Esophagus squamous epithelium (tissue), 5 donors: ENCODE measurements at regions of chr18 and their contacts with region 1.

Region 1: GRCh38 chr18:48030616-48031480 is 100.4 kb upstream of the SMAD2 start:
- DNase-seq: no peak
- H3K4me3 ChIP-seq: no peak overlapping the region
- H3K27ac ChIP-seq: peak overlapping the region; percentile 47 to 80 (median 62)
- H3K4me1 ChIP-seq: peaks cover 15 to 96% (median 40%) of the 10 kb centered on the region in 3 donors
- H3K27me3 ChIP-seq: no peaks in the 10 kb centered on the region
- CTCF ChIP-seq: peak; percentile 30 to 79 (median 69)
- POLR2A ChIP-seq: no peak

Region 2: DNA sequence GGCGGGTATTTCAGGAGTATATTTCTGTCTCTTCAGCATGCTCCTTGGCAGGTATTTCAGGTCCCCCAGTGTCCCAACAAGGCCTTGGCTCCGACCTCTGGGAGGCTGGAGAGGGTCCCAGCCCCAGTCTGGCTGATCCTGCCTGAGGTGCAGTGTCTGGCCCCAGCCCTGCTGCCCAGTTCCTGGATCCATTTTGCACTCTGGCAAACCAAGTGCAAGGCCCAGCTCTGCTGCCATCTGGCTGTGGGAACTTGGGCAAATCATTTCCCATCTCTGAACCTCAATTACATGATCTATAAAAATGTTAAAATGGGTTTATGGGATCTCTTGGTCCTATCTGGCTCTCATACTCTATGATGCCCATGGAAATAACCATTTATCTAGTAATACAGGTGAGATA is 314.7 kb after region 1 on chr18:
- intact Hi-C with region 1: loop called (anchors 10 kb)
- DNase-seq: no peak
- H3K4me3 ChIP-seq: no peak overlapping the region
- H3K27ac ChIP-seq: no peak overlapping the region
- H3K4me1 ChIP-seq: peaks cover 0 to 24% (median 0%) of the 10 kb centered on the region in 3 donors
- H3K27me3 ChIP-seq: no peaks in the 10 kb centered on the region
- CTCF ChIP-seq: peak in 5 of 6 experiments; percentile 31 to 62 (median 45)
- POLR2A ChIP-seq: no peak

Region 3: DNA sequence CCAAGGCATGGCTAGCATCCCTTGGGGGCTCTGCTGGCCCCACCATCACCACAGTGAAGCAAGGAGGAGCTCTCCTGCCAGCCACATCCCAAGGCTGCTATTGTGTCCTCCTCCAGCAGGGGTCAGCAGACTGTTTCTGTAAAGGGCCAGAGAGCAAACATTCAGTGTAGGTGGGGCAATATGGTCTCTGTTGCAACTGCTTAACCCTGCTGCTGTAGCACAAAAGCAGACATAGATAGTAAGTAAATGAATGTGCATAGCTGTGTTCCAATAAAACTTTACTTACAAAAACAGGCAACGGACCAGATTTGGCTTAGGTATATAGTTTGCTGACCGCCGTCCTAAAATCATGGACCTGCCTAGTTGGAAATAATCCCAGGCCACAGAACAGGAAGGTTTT is 414.7 kb after region 1 on chr18:
- intact Hi-C with region 1: loop called (anchors 10 kb)
- DNase-seq: no peak
- H3K4me3 ChIP-seq: no peak overlapping the region
- H3K27ac ChIP-seq: peak overlapping the region in 1 of 4 donors; percentile 26
- H3K4me1 ChIP-seq: peaks cover 10 to 52% (median 31%) of the 10 kb centered on the region in 3 donors
- H3K27me3 ChIP-seq: no peaks in the 10 kb centered on the region
- CTCF ChIP-seq: peak; percentile 65 to 95 (median 88)
- POLR2A ChIP-seq: no peak